Dorsolateral prefrontal cortex (tissue), 120 donors: ENCODE measurements at regions of chr7 and their contacts with region 1.

Region 1: DNA sequence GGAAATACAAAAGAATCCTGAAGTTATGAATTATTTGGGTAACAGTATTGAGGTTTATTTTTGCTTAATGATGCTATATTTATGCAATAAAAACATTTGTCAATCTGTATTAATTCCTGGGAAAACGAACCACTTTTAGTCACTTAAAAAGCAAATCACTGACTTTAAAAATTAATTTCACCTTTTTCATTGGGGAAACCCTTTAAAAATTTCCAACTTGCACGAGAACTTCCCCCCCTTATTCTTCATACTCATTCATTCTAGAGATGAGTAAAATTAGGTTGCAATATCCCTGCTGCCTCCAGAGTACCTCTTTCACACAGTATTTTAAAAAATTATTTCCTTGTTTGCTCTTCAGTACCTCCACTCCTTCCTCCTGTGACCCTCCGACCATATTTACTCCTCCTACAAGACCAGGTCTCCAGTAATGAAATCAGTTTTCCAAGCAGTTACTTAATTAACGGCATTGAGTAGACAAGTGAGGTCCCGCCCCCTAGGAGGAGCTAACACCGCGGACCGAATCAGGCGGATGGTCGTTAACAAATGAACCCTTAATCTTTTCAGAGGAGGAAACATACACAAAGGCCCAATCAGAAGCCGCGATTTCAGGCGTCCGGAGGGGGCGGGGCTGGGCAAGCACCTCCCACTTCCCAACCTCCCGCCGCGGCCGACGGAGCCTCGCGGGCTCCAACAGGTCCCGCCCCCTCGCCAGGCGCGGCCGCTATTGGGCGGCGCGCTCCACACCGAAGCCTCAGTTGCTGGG is 465 bp upstream of the TRIM24 start:
- DNase-seq: peak; percentile 98 to 99 (median 99)
- H3K4me3 ChIP-seq: peak overlapping the region; percentile 27 to 98 (median 84)
- H3K27ac ChIP-seq: peak overlapping the region in 49 of 59 donors; percentile 5 to 97 (median 67)
- H3K27me3 ChIP-seq: no peaks in the 10 kb centered on the region
- CTCF ChIP-seq: peak in 51 of 56 donors; percentile 14 to 69 (median 53)

Region 2: DNA sequence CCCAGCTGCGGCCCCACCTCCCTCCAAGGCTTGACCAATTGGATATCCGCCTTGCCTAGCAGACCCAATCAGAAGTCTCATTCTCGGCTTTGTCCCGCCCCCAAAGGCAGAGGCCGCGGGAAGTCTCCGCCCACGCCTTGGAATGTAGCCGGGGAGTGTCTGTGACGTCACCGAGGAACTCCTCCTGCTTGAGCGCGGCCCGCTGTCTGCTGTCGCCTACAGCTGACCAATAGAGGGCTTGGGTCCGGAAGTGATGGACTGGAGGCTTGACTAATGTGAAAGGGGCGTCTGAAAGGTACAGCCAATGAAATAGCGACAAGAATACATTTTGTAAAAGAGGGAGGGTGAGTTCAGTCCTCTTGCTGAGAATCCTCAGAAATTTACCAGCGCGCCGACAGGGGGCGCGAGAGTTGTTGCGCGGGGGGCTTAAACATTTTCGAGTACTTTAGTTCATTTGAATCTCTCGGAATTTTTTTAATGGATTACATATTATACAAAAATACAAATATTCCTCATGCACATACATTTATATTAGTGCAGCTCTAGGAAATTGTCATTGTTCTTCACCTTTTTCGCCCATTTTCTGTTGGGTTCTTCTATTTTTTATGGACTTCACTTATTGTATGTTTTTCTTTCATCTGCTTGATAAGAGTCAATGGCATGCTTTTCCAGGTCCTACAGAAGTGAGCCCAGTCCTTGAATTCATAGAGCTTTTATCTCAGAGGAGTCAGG is 457.3 kb before region 1 on chr7:
- intact Hi-C with region 1: loop called in 1 of 2 experiments (anchors 10 kb)
- DNase-seq: peak; percentile 98 to 100 (median 99)
- H3K4me3 ChIP-seq: peak overlapping the region; percentile 62 to 99 (median 89)
- H3K27ac ChIP-seq: peak overlapping the region in 58 of 59 donors; percentile 27 to 98 (median 92)
- H3K27me3 ChIP-seq: no peaks in the 10 kb centered on the region
- CTCF ChIP-seq: peak; percentile 84 to 100 (median 95)

Region 3: DNA sequence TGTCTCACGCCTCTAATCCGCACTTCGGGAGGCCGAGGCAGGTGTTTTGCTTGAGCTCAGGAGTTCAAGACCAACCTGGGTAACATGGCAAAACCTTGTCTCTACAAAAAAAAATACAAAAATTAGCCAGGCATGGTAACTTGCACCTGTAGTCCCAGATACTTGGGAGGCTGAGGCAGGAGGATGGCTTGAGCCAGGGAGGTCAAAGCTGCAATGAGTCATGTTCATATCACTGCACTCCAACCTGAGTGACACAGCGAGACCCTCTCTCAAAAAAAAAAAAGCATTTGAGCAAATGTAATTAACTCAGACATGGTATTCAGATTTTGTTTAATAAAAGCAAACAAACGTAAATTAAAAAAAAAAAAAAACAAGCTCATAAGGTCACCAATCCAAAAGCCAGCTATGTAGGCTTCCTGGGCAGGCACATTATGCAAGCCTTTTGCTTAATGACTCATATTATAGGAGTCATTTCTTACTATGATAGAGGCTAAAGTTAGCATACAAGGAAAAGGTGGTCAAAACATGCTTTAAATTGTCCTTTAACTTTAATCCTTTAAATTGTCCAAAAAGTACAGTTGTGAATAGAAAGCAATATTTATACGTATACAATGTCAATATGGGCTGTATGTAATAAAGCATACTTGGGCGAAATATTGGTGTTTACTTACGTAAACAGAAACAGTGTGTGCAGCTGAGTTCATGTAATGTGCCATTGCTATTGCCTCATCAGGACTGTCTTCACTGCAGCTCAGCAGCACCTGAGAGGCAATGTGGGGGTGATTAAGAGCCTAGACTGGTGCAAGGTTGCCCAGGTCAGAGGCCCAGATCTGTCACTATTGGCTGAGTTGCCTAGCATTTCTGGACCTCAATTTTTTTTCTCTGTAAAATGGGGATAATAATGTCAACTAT is 370.3 kb before region 1 on chr7:
- intact Hi-C with region 1: no loop called
- DNase-seq: no peak
- H3K4me3 ChIP-seq: no peak overlapping the region
- H3K27ac ChIP-seq: no peak overlapping the region
- H3K27me3 ChIP-seq: peaks cover 0 to 5% (median 0%) of the 10 kb centered on the region in 45 donors
- CTCF ChIP-seq: no peak

Region 4: GRCh38 chr7:138645290-138645689 is 185.7 kb after region 1 on chr7:
- intact Hi-C with region 1: loop called in 1 of 2 experiments (anchors 5 kb)
- DNase-seq: no peak
- H3K4me3 ChIP-seq: no peak overlapping the region
- H3K27ac ChIP-seq: no peak overlapping the region
- H3K27me3 ChIP-seq: no peaks in the 10 kb centered on the region
- CTCF ChIP-seq: no peak

Region 5: DNA sequence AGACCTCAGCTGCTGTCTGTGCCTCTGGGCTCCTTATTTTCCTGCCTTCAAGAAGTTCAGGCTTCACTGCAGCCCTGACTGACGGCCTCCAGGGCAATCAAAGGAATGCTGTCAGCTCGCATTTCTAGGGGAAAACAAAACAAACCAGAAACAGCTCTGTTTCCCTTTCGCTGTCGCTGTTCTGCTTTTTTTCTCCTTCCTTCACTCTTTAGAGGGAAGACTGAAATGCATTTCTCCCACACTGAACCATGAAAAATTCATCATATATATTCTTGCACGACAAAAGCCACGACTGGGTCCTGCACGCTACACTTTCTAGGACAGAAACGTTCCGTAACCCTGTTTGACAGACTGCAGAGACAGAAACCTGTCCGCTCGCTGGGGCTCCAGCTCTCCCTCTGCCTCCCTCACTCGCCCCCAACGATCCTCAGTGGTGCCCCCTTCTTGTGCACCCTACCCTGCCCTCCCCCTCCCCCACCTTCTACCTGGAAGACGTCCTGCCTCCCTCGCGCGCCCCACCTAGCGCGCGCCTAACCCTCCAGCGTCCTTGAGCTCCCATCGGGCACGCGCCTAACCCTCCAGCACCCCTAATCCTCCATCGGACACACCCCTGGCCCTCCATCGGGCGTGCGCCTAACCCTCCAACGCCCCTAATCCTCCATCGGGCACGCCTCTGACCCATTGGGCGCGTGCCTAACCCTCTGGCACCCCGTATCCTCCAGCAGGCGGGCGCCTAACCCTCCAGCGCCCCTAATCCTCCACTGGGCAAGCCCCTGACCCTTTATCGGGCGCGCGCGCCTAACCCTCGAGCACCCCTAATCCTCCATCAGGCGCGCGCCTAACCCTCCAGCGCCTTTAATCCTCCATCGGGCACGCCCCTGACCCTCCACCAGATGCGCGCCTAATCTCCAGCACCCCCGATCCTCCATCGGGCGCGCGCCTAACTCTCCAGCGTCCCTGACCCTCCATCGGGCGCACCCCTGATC is 204.4 kb after region 1 on chr7:
- intact Hi-C with region 1: loop called in 1 of 2 experiments (anchors 5 kb)
- DNase-seq: peak in 2 of 10 donors; percentile 14 to 45
- H3K4me3 ChIP-seq: peak overlapping the region; percentile 29 to 84 (median 62)
- H3K27ac ChIP-seq: peak overlapping the region in 47 of 59 donors; percentile 16 to 90 (median 65)
- H3K27me3 ChIP-seq: no peaks in the 10 kb centered on the region
- CTCF ChIP-seq: peak in 1 of 56 donors; percentile 11

Region 6: GRCh38 chr7:138738551-138739335 is 279.1 kb after region 1 on chr7:
- intact Hi-C with region 1: loop called (anchors 2 to 5 kb)
- DNase-seq: peak; percentile 42 to 97 (median 90)
- H3K4me3 ChIP-seq: peak overlapping the region in 1 of 59 donors; percentile 10
- H3K27ac ChIP-seq: no peak overlapping the region
- H3K27me3 ChIP-seq: no peaks in the 10 kb centered on the region
- CTCF ChIP-seq: peak; percentile 79 to 99 (median 95)